Transverse colon (tissue), 4 donors: ENCODE measurements at regions of chrX and their contacts with region 1.

Region 1: GRCh38 chrX:47030339-47030738 is 47.9 kb upstream of the RGN start:
- DNase-seq: no peak
- H3K4me3 ChIP-seq: no peak overlapping the region
- H3K27ac ChIP-seq: no peak overlapping the region
- H3K4me1 ChIP-seq: no peaks in the 10 kb centered on the region
- H3K27me3 ChIP-seq: no peaks in the 10 kb centered on the region
- CTCF ChIP-seq: peak; percentile 36 to 69 (median 48)
- EP300 ChIP-seq: no peak
- POLR2A ChIP-seq: no peak

Region 2: DNA sequence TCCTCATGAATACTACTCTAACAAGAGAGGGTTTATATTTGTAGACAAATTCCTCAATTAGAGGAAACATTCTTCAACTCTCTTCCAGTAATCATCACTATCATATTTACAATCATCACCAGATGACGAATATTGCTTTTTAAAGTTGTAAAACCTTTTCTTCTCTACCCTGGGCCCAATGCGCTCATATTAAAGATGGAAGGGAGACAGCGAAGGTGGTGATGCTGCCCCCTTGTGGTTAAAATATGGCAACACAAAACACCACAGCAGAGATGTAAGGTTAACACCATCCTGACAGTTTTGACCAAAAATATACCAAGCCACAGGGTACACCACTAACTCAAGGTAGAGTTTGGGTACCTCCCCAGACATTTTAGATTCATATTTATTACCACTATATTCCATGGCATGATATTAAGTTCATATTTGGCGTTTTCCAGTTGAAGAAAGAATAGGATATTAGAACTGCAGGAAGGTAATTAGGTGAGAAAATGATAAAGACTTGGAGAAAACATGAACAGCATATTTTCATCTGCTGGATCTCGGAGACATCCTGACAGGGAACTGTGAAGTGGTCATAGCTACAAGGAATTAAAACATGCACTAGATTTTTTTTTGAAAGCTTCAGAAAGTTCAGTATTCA is 344.2 kb before region 1 on chrX:
- in situ Hi-C with region 1: no loop called
- intact Hi-C with region 1: loop called (anchors 10 kb)
- DNase-seq: peak; percentile 22
- H3K4me3 ChIP-seq: no peak overlapping the region
- H3K27ac ChIP-seq: no peak overlapping the region
- H3K4me1 ChIP-seq: no peaks in the 10 kb centered on the region
- H3K27me3 ChIP-seq: no peaks in the 10 kb centered on the region
- CTCF ChIP-seq: peak; percentile 39 to 66 (median 52)
- EP300 ChIP-seq: no peak
- POLR2A ChIP-seq: no peak

Region 3: GRCh38 chrX:46898207-46898606 is 132.1 kb before region 1 on chrX:
- in situ Hi-C with region 1: loop called in 1 of 4 experiments (anchors 25 kb)
- intact Hi-C with region 1: loop called (anchors 10 kb)
- DNase-seq: no peak
- H3K4me3 ChIP-seq: no peak overlapping the region
- H3K27ac ChIP-seq: no peak overlapping the region
- H3K4me1 ChIP-seq: no peaks in the 10 kb centered on the region
- H3K27me3 ChIP-seq: no peaks in the 10 kb centered on the region
- CTCF ChIP-seq: no peak
- EP300 ChIP-seq: no peak
- POLR2A ChIP-seq: no peak

Region 4: DNA sequence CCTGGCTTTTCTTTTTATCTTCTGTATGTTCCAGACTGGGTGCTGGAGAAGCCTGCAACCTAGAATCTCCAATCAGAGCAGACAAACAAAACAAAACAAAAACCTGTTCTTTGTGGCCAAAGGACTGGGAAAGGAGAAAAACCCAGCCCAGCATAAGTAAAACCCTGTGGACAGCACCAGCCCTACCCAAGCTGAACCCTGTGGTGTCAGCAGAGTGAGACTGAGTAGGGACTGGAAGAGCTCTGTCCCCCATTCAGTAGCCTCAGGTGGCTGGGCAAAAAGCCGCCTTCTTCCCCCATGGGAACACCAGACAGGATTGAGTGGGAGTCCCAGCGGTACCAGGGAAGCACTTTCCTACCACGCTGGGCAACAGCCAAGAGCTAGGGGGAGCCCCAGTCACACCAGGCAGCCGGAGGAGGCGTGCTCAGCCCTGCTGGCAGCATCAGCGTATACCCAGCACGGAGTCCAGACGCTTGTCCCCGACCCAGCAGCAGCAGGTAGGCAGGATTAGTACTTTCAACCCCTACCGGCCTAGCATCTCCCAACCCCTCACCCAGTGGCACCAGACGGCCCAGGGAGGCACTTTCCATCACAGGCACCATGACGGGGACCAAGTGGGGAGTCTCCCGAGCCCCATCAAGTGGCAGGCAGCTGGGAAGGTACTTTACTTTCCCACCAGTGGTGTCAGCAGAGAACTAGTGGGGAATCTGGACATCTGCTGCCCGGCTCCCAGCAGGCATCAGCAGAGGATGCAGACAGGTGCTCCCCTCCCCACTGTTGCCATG is 126.7 kb before region 1 on chrX:
- in situ Hi-C with region 1: loop called in 1 of 4 experiments (anchors 25 kb)
- intact Hi-C with region 1: loop called (anchors 10 kb)
- DNase-seq: peak; percentile 81
- H3K4me3 ChIP-seq: peak overlapping the region in 3 of 4 donors; percentile 29 to 50 (median 29)
- H3K27ac ChIP-seq: peak overlapping the region in 1 of 4 donors; percentile 29
- H3K4me1 ChIP-seq: peaks cover 0 to 4% (median 0%) of the 10 kb centered on the region in 4 donors
- H3K27me3 ChIP-seq: no peaks in the 10 kb centered on the region
- CTCF ChIP-seq: peak; percentile 44 to 78 (median 60)
- EP300 ChIP-seq: no peak
- POLR2A ChIP-seq: no peak

Region 5: DNA sequence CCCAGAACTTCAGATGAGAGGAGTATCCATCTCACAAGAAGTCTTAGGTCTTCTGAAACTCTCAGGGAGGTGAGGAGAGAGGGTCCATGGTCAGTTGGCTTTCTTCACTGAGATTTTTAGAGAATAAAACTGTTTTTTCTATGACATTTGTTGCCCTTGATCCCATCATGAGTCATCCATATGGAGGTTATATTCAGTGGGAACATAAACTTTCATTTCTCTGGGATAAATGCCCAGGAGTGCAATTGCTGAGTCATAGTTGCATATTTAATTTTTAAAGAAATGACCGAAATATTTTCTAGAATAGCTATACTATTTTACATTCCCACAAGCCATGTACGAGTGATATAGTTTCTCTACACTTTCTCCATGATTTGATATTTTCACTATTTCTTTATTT is 51.0 kb before region 1 on chrX:
- in situ Hi-C with region 1: no loop called
- intact Hi-C with region 1: no loop called
- DNase-seq: no peak
- H3K4me3 ChIP-seq: no peak overlapping the region
- H3K27ac ChIP-seq: no peak overlapping the region
- H3K4me1 ChIP-seq: no peaks in the 10 kb centered on the region
- H3K27me3 ChIP-seq: no peaks in the 10 kb centered on the region
- CTCF ChIP-seq: no peak
- EP300 ChIP-seq: no peak
- POLR2A ChIP-seq: no peak

Region 6: DNA sequence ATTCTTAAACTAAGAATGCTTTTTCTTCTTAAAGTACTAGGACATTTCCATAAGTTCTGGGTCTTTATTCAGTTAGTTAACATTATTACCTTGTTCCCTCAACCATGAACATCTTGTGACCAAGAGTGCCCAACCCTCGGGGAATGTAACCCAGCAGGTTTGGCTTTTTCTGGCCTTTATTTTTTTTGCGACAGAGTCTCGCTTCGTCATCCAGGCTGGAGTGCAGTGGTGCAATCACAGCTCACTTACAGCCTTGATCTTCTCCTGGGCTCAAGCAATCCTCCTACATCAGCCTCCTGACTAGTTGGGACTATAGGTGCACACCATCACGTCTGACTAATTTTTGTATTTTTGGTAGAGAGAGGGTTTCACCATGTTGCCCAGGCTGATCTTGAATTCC is 267.5 kb after region 1 on chrX:
- in situ Hi-C with region 1: no loop called
- intact Hi-C with region 1: no loop called
- DNase-seq: no peak
- H3K4me3 ChIP-seq: no peak overlapping the region
- H3K27ac ChIP-seq: no peak overlapping the region
- H3K4me1 ChIP-seq: no peaks in the 10 kb centered on the region
- H3K27me3 ChIP-seq: no peaks in the 10 kb centered on the region
- CTCF ChIP-seq: no peak
- EP300 ChIP-seq: no peak
- POLR2A ChIP-seq: no peak

Region 7: DNA sequence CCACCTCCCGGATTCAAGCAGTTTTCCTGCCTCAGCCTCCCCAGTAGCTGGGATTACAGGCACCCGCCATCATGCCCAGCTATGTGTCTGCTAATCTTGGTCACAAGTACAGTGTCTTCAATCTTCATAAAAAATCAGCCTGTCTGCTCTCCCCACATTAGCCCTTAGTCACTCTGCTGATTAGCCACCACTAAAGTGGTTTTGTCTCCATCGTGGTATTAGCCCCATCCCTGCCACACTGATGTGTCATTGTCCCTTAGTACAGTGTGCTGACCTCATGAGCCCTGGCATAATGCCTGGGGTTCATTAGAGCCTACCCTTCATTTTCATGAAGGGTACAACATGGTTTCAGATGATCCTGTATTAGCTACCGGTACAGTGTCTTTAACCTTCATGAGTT is 389.9 kb after region 1 on chrX:
- in situ Hi-C with region 1: no loop called
- intact Hi-C with region 1: no loop called
- DNase-seq: no peak
- H3K4me3 ChIP-seq: no peak overlapping the region
- H3K27ac ChIP-seq: no peak overlapping the region
- H3K4me1 ChIP-seq: no peaks in the 10 kb centered on the region
- H3K27me3 ChIP-seq: no peaks in the 10 kb centered on the region
- CTCF ChIP-seq: no peak
- EP300 ChIP-seq: no peak
- POLR2A ChIP-seq: no peak